ENCODE measurements at regions of chr14 and their contacts with region 1.

Region 1: GRCh38 chr14:74038015-74038859 is 19.1 kb downstream of the BBOF1 start:
- DNase-seq: peak; percentile 65
- H3K4me3 ChIP-seq: no peak overlapping the region
- H3K27ac ChIP-seq: no peak overlapping the region
- H3K4me1 ChIP-seq: no peaks in the 10 kb centered on the region
- CTCF ChIP-seq: peak; percentile 97

Region 2: DNA sequence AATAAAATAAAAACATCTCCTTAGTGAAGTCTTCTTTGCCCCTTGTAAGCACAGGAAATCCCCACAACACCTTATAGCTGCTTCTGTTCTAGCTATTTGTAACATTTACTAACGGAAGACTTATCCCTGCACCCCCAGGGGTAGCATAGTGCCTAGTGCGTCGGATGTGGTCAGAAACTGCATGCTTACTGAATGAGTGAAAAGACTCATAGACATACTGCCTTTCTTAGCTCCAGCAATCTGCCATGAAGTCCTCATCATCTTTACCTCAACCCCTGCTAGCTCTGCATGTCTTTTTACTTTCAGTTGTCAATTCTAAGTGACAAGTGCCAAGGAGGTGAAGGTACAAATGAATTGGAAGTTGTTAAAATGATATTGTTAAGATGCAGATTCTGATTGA is 534.6 kb before region 1 on chr14:
- CTCF ChIA-PET with region 1: no interaction called
- POLR2A ChIA-PET with region 1: no interaction called
- intact Hi-C with region 1: loop called (anchors 10 kb)
- DNase-seq: peak; percentile 25
- H3K4me3 ChIP-seq: no peak overlapping the region
- H3K27ac ChIP-seq: no peak overlapping the region
- H3K4me1 ChIP-seq: no peaks in the 10 kb centered on the region
- CTCF ChIP-seq: no peak

Region 3: GRCh38 chr14:73713803-73714655 is 324.2 kb before region 1 on chr14 and contains the start of gene PNMA1:
- CTCF ChIA-PET with region 1: no interaction called
- POLR2A ChIA-PET with region 1: no interaction called
- intact Hi-C with region 1: loop called (anchors 10 kb)
- DNase-seq: peak; percentile 90
- H3K4me3 ChIP-seq: peak within 1 kb of the TSS; percentile 71
- H3K27ac ChIP-seq: peak within 1 kb of the TSS; percentile 58
- H3K4me1 ChIP-seq: peaks cover 27% of the 10 kb centered on the region
- CTCF ChIP-seq: no peak
- total RNA-seq, gene PNMA1: 5.8 and 6.0 TPM in 2 replicates

Region 4: DNA sequence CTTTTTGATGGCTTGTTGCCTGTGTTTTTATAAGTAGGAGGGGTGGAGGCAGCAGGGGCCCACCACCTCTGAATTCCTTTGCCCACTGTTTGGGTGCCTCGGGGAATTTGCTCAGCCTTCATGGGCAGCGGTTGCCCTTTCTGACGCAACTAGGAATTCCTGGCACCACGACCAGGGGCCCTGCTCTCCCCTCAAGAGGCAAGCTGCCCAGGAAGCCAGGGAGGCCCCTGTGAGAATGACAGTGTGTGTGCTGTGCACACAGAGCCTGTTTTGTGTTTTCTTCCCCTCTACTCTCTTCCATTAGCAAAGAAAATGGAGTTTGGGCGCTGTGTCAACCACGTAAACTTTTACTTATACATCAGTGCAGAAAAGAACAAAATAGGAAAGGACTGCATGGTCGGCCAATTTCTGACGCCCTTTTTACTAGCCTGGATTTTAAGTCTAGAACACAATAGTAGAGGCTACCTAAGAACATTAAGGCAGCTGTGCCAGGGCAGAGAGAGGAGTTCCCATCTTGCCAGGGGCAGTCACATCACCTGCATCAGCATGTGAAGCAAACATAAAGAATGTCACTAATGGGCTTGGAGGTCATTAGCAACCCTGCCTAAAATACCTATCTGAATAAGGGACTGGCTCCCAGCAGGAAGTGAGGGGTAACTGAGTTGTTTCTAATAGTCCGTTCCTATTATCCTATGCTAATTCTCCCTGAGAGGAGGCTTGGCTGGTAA is 204.5 kb before region 1 on chr14:
- CTCF ChIA-PET with region 1: no interaction called
- POLR2A ChIA-PET with region 1: no interaction called
- intact Hi-C with region 1: no loop called
- DNase-seq: no peak
- H3K4me3 ChIP-seq: no peak overlapping the region
- H3K27ac ChIP-seq: no peak overlapping the region
- H3K4me1 ChIP-seq: no peaks in the 10 kb centered on the region
- CTCF ChIP-seq: no peak

Region 5: DNA sequence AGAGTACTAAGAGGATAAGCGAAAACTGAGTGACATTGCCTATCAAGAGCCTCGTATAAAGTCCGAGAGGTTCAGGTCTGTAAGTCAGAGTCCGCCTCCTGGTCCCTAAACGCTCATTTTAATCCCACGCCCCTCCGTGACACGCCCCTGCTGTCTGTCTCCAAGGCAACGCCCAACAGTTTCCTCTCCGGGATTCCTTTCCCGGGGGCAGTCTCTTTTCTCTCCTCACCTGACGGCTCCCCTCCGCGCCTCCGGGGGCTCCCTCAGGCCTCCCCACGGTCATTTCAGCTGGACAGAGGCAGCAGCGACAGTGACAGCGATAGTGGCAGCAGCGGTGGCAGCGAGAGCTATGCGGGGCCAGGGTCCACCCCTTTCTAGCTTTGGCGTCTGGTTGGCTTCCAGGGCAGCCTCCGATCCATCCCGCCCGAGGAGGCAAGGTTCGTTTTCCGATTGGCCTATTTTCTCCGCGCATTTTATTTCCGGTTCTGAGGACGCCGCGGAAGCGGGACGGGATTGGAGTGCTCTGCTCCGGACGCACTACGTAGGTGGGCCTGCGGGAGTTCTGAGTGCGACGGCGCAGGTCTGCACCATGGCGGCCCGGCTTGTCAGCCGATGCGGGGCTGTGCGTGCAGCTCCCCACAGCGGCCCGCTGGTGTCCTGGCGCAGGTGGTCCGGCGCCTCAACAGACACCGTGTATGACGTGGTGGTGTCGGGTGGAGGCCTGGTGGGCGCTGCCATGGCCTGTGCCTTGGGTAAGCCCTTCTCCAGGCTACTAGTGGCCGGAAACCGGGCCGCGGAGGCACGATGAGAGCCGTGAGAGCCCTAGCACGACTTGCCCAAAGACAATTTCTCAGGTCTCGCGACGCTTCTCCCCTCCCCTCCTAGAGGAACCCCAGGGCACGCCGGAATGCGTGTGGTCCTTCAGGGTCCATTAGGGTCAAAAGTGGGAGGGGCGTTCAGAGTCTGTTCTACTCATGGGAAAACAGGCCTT is 88.2 kb before region 1 on chr14 and contains the starts of genes COQ6 and FAM161B:
- CTCF ChIA-PET with region 1: no interaction called
- POLR2A ChIA-PET with region 1: no interaction called
- intact Hi-C with region 1: loop called (anchors 5 kb)
- DNase-seq: peak; percentile 95
- H3K4me3 ChIP-seq: peak within 1 kb of the TSS; percentile 75
- H3K27ac ChIP-seq: peak within 1 kb of the TSS; percentile 51
- H3K4me1 ChIP-seq: peaks cover 15% of the 10 kb centered on the region
- CTCF ChIP-seq: peak; percentile 61
- total RNA-seq, gene COQ6: 18.7 and 35.4 TPM in 2 replicates
- total RNA-seq, gene FAM161B: 2.3 and 2.6 TPM in 2 replicates

Region 6: DNA sequence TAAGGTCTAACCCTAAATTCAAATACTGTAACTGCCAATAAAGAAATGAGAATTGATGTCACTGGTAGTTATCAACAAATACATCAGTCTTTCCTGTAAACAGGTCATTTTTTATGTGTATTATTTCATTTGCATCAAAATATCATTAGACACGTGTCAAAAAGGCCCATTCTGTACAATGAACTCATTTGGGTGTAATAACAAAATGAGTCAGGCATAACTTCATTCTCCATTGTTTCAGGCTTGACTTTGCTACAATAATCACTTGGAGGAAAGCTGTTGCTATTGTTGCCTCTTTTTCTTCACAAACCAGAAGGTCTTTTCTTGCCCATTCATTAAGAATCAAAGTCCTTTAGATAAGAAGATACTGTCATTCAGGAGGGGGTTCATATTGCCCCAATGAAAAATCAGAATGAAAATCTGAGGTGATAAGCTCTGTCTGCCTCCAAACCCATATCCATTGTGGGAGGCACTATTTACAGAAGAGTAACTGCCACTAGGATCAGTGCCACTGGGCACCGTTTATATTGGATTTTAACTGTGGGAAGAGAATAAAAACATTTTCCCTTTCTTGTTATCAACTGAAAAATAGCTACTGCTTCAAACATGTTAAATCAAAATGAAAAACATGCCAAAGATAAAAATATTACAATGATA is 29.3 kb before region 1 on chr14:
- CTCF ChIA-PET with region 1: no interaction called
- POLR2A ChIA-PET with region 1: no interaction called
- intact Hi-C with region 1: no loop called
- DNase-seq: no peak
- H3K4me3 ChIP-seq: no peak overlapping the region
- H3K27ac ChIP-seq: no peak overlapping the region
- H3K4me1 ChIP-seq: no peaks in the 10 kb centered on the region
- CTCF ChIP-seq: no peak

Region 7: GRCh38 chr14:74077401-74077800 is 39.2 kb after region 1 on chr14:
- CTCF ChIA-PET with region 1: no interaction called
- POLR2A ChIA-PET with region 1: no interaction called
- intact Hi-C with region 1: no loop called
- DNase-seq: no peak
- H3K4me3 ChIP-seq: no peak overlapping the region
- H3K27ac ChIP-seq: no peak overlapping the region
- H3K4me1 ChIP-seq: no peaks in the 10 kb centered on the region
- CTCF ChIP-seq: no peak